BJ (cell line): ENCODE measurements at regions of chr7 and their contacts with region 1.

Region 1: GRCh38 chr7:131071786-131072504 is 255.7 kb upstream of the MKLN1 start:
- DNase-seq: no peak
- H3K4me3 ChIP-seq: no peak overlapping the region
- H3K27me3 ChIP-seq: no peaks in the 10 kb centered on the region
- CTCF ChIP-seq: no peak; the same call in 1 of the 2 replicates

Region 2: GRCh38 chr7:131302876-131303707 is 231.1 kb after region 1 on chr7:
- CTCF ChIA-PET with region 1: interaction called, 18 read pairs
- POLR2A ChIA-PET with region 1: no interaction called
- DNase-seq: no peak
- H3K4me3 ChIP-seq: no peak overlapping the region
- H3K27me3 ChIP-seq: no peaks in the 10 kb centered on the region
- CTCF ChIP-seq: peak; percentile 51; the same call in 1 of the 2 replicates

Region 3: DNA sequence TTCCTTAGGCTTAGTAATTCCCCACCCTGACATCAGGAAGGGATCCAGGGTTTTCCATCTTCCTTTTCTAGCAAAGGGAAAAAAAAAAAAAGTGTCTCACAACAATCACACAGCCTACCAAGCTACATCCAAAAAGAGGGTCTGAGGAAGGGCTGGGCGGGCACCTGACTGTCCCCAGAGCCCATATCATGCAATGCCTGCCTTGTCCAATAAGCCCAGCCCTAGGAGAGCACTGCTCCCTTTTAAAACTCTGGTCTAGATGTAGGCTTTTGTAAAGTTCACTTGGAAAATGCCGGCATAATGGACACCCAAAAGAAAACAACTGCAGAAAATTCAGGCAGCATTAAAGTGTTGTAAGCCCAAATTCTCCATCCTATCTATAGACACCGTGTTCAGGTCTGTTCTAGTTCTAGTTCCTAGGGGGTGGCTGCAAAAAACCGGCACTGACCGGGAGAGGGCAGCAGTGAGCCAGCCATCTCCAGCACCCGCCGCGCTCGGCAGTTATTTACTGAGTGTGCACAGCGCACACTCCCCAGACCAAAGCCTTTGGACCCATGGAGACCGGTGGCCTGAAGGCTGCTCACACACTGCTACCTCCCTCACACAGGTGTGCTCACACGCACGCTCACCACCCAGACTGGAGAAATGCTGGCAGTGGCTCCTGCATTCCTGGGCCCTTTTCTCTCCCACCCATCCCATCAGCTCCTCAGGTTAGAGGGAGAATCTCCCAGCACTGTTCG is 435.8 kb after region 1 on chr7:
- CTCF ChIA-PET with region 1: interaction called, 3 read pairs
- POLR2A ChIA-PET with region 1: interaction called, 18 read pairs
- DNase-seq: no peak
- H3K4me3 ChIP-seq: no peak overlapping the region
- H3K27me3 ChIP-seq: no peaks in the 10 kb centered on the region
- CTCF ChIP-seq: peak; percentile 97